WTC11 (cell line): ENCODE measurements at regions of chr3 and their contacts with region 1.

Region 1: DNA sequence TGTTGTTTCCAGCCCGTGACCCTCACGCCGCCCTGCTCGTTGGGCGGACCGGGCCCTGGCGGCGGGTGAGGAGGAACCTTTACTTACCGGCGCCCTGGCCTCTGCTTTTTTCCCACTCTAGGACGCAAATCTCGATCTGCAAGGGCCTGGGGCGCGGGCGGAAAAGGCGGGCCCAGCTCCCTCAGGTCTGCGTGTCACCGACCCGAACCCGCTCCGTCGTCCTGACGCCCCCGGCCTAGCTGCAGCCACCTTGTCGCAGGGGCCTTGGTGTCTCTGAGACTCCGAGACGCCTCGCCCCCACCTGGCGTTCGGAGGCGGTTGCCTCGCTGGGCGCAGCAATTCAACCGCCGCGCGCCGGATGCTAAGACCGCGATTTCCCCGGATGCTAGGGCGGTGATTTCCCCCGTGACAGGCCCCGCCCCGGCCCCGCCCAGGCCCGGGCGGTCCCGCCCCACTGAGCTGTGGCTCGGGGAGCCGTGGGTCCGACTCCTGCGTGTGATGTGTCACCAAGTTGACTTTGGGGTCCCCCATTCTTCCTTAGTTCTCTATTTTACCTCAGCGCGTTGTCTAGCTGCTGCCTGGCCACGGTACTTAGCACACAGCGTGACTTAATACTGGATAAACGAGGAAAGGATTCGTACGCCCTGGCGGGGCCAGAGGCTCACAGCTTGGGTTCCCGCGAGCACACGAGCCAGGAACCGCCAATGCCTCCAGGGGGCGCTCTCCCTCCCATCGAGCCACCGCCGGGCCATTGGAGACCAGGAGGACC is at the start of gene RPL39L:
- DNase-seq: peak; percentile 91
- ATAC-seq: peak; percentile 91
- H3K4me3 Mint-ChIP-seq: peak within 1 kb of the TSS; percentile 80
- H3K27ac Mint-ChIP-seq: peak within 1 kb of the TSS; percentile 91
- H3K4me1 Mint-ChIP-seq: peaks cover 6% of the 10 kb centered on the region
- H3K27me3 Mint-ChIP-seq: no peaks in the 10 kb centered on the region
- CTCF ChIP-seq: peak; percentile 97
- total RNA-seq, gene RPL39L: 78.3 to 79.5 TPM (median 79.0 TPM) in 3 replicates

Region 2: DNA sequence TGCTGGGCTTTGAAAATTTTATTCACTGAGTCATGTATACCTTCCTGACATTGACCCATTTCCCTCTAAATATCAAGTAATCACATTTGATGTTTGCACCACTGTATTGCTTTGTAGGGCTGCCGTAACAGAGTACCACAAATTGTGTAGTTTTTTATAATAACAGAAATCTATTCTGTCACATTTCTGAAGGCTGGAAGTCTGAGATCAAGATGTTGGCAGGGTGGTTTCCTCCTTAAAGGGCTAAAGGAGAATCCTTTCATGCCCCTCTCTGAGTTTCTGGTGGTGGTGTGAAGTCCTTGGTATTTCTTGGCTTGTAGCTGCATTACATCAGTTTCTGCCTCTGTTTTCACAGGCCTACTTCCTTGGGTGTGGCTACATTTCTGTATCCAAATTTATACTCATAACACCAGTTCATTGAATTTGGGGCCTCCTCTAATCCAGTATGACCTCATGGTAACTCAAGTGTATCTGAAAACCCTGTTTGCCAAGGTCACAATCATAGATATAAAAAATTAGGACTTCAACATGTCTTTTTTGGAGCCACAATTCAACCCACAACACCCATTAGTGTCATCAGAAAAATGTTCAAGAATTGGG is 238.1 kb before region 1 on chr3:
- CTCF ChIA-PET with region 1: no interaction called
- POLR2A ChIA-PET with region 1: no interaction called
- DNase-seq: no peak
- ATAC-seq: no peak
- H3K4me3 Mint-ChIP-seq: no peak overlapping the region
- H3K27ac Mint-ChIP-seq: no peak overlapping the region
- H3K4me1 Mint-ChIP-seq: peaks cover 33% of the 10 kb centered on the region
- H3K27me3 Mint-ChIP-seq: peaks cover 6% of the 10 kb centered on the region
- CTCF ChIP-seq: no peak

Region 3: GRCh38 chr3:187066228-187066995 is 72.9 kb before region 1 on chr3:
- CTCF ChIA-PET with region 1: interaction called, 10 read pairs
- POLR2A ChIA-PET with region 1: no interaction called
- DNase-seq: peak; percentile 68
- ATAC-seq: peak; percentile 88
- H3K4me3 Mint-ChIP-seq: no peak overlapping the region
- H3K27ac Mint-ChIP-seq: peak overlapping the region; percentile 30; the same call in 1 of the 2 replicates
- H3K4me1 Mint-ChIP-seq: peaks cover 40% of the 10 kb centered on the region
- H3K27me3 Mint-ChIP-seq: no peaks in the 10 kb centered on the region
- CTCF ChIP-seq: peak; percentile 15; the same call in 1 of the 2 replicates

Region 4: DNA sequence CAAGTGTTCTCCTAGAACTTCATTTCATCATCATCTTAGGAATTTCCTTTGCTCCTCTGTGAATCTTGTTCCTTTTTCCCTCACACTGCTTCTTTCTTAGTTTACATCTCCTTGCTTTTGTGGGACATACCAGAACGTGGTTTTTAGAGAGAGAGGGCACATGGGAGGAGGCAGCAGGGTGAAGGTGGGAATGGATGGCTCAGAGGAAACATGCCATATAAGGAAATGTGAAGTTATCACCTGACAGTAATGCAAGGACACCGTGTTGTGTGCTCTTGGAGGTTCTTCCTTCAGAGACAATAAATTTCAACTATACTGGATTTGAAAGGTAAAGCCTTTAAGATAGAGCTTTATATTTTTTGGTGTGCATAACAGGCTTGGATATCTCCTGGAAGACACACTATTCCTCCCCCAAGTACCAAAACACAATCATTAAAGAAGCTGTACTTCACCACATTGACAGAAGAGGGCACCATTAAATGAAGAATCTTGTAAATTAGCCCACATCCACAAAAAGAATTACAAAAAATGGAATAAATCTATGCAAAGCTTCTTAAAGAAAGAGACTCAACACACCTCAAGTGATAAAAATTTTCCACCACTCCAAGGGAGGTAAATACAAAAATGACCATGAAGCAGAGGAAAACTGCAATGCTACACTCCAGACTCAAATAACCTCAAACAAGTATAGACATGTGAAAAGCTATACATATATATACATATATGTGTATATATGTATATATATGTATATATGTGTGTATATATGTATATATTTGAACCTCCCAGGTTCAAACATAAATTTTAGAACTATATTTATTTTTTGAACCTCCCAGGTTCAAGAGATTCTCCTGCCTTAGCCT is 26.1 kb before region 1 on chr3:
- CTCF ChIA-PET with region 1: interaction called, 40 read pairs
- POLR2A ChIA-PET with region 1: no interaction called
- DNase-seq: no peak
- ATAC-seq: peak; percentile 86
- H3K4me3 Mint-ChIP-seq: no peak overlapping the region
- H3K27ac Mint-ChIP-seq: no peak overlapping the region
- H3K4me1 Mint-ChIP-seq: peaks cover 7% of the 10 kb centered on the region
- H3K27me3 Mint-ChIP-seq: no peaks in the 10 kb centered on the region
- CTCF ChIP-seq: peak; percentile 16

Region 5: DNA sequence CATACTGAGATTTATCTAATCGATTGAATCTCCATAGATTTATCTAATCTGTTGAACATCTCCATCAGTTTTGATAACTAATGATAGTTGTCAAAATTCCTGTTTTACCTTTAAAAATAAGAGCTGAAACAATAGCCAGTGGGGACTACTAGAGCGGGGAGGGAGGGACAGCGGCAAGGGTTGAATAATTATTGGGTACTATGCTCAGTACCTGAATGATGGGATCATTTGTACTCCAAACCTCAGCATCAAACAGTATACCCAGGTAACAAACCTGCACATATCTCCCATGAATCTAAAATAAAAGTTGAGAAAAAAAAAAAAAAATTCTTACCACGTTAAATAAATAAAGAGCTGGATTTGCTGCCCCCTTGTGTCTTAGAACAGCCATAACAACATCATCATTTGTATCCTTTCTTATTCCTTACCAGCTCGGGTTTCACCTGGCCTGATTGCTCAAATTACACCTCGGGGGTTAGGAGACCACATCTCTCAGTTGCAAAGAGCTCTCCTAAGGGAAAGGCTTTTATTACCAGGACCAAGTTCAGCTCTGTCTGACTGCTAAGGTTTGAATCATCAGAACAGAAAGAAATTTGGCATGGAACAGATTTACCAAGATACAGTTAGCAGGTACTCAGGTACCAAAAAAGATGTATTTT is 25.7 kb after region 1 on chr3:
- CTCF ChIA-PET with region 1: interaction called, 136 read pairs
- POLR2A ChIA-PET with region 1: interaction called, 11 read pairs
- DNase-seq: peak; percentile 53
- ATAC-seq: peak; percentile 93
- H3K4me3 Mint-ChIP-seq: peak overlapping the region; percentile 2
- H3K27ac Mint-ChIP-seq: peak overlapping the region; percentile 42; the same call in 1 of the 2 replicates
- H3K4me1 Mint-ChIP-seq: peaks cover 72% of the 10 kb centered on the region
- H3K27me3 Mint-ChIP-seq: no peaks in the 10 kb centered on the region
- CTCF ChIP-seq: peak; percentile 69

Region 6: DNA sequence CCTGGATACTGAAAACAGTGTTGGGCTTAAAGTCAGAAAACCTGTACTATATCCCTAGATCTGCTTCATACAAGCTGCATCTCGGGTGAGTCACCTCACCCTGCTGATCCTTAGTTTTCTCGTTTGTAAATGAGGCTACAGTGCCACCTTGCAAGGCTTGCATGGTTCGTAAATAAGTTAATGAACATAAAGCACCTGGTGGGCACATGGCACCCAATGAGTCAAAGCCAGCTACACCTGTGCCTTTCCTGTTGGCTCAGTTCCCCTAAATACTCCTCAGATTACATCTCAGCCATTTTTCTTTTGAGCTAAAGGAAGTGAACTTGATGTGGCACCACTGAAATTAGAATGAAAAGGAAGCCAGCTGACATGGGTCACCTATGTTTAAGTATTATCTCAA is 84.5 kb after region 1 on chr3:
- CTCF ChIA-PET with region 1: interaction called, 12 read pairs
- POLR2A ChIA-PET with region 1: no interaction called
- DNase-seq: no peak
- ATAC-seq: no peak
- H3K4me3 Mint-ChIP-seq: no peak overlapping the region
- H3K27ac Mint-ChIP-seq: no peak overlapping the region
- H3K4me1 Mint-ChIP-seq: peaks cover 15% of the 10 kb centered on the region
- H3K27me3 Mint-ChIP-seq: peaks cover 4% of the 10 kb centered on the region; the same call in 1 of the 2 replicates
- CTCF ChIP-seq: no peak